ENCODE measurements at regions of chr12 and their contacts with region 1.

Region 1: DNA sequence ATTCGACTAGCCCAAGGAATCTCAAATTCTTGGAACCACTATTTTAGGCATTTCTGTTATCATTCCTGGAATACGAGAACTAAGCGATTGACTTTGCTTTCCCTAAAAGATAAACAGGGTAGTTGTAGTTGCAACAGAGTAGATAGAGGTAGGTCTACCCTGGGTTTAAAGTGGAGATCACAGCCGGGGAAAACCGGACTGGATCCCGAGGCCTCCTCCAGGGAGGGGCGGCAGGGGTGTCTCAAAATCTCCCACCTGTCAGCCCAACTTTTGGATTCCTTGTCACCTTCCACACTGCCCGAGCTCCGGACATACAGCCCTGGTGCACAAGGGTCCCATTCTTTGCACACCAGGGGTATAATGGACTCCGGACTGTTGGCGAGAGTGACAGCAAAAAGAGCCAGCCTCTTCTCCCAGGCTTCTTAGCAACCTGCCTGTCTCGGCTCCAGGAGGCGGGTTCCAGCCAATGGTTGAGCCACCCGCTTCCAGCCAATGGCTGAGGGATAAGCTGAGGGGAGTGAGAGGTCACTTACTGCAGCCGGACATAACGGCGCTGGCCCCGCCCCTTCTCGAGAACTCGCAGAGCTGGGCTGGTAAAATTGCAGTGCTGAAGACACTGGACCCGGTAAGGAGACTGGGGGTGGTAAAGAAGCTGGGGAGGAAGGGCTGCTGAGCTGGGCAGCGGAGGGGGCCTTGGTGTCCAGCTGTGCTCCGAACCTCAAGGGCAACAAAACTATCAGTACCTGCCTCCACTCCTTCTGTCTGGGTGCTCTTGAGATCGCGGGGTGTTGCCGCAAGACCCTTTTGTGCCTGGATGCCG is at the start of gene SUOX:
- DNase-seq: peak; percentile 98
- H3K4me3 Mint-ChIP-seq: peak within 1 kb of the TSS; percentile 92
- H3K27ac Mint-ChIP-seq: peak within 1 kb of the TSS; percentile 28
- H3K4me1 Mint-ChIP-seq: peaks cover 12% of the 10 kb centered on the region
- H3K27me3 Mint-ChIP-seq: no peaks in the 10 kb centered on the region
- CTCF ChIP-seq: no peak
- total RNA-seq, gene SUOX: 6.3 and 7.9 TPM in 2 replicates

Region 2: DNA sequence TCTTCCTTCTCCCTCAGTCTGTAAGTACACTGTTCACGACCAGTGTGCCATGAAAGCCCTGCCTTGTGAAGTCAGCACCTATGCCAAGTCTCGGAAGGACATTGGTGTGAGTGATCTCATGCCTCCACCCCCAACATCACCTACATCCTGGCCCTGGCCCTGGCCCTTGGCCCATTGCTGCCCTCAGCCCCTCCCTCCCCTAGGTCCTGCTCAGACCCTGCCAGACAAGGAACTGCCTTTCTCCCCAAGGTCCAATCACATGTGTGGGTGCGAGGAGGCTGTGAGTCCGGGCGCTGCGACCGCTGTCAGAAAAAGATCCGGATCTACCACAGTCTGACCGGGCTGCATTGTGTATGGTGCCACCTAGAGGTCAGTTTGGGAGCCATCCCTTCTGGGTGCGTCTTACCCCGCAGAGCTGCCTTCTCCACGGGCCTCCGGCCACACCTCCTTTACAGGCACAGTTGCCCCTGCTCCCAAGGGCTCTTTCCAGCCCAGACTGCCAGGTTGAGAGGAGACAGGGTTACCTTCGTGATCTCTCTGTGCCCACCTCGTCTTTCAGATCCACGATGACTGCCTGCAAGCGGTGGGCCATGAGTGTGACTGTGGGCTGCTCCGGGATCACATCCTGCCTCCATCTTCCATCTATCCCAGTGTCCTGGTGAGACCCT is 56.7 kb before region 1 on chr12:
- CTCF ChIA-PET with region 1: interaction called, 14 read pairs
- POLR2A ChIA-PET with region 1: no interaction called
- intact Hi-C with region 1: no loop called
- DNase-seq: peak; percentile 91
- H3K4me3 Mint-ChIP-seq: peak overlapping the region; percentile 48
- H3K27ac Mint-ChIP-seq: peak overlapping the region; percentile 52
- H3K4me1 Mint-ChIP-seq: peaks cover 49% of the 10 kb centered on the region
- H3K27me3 Mint-ChIP-seq: no peaks in the 10 kb centered on the region
- CTCF ChIP-seq: peak; percentile 85

Region 3: GRCh38 chr12:55973598-55974307 is 23.2 kb before region 1 on chr12 and contains the start of gene RAB5B:
- CTCF ChIA-PET with region 1: interaction called, 14 read pairs
- POLR2A ChIA-PET with region 1: interaction called, 71 read pairs
- intact Hi-C with region 1: no loop called
- DNase-seq: peak; percentile 100
- H3K4me3 Mint-ChIP-seq: no peak within 1 kb of the TSS
- H3K27ac Mint-ChIP-seq: no peak within 1 kb of the TSS
- H3K4me1 Mint-ChIP-seq: peaks cover 25% of the 10 kb centered on the region
- H3K27me3 Mint-ChIP-seq: no peaks in the 10 kb centered on the region
- CTCF ChIP-seq: no peak
- total RNA-seq, gene RAB5B: 67.4 and 96.1 TPM in 2 replicates

Region 4: GRCh38 chr12:56007564-56008559 is 10.9 kb after region 1 on chr12:
- CTCF ChIA-PET with region 1: interaction called, 19 read pairs
- POLR2A ChIA-PET with region 1: interaction called, 62 read pairs
- intact Hi-C with region 1: no loop called
- DNase-seq: peak; percentile 43
- H3K4me3 Mint-ChIP-seq: peak overlapping the region; percentile 69
- H3K27ac Mint-ChIP-seq: peak overlapping the region; percentile 60
- H3K4me1 Mint-ChIP-seq: no peaks in the 10 kb centered on the region
- H3K27me3 Mint-ChIP-seq: no peaks in the 10 kb centered on the region
- CTCF ChIP-seq: no peak

Region 5: GRCh38 chr12:56041552-56042429 is 44.9 kb after region 1 on chr12 and contains the start of gene RPS26:
- CTCF ChIA-PET with region 1: interaction called, 13 read pairs
- POLR2A ChIA-PET with region 1: interaction called, 25 read pairs
- intact Hi-C with region 1: loop called (anchors 1 kb)
- DNase-seq: peak; percentile 99
- H3K4me3 Mint-ChIP-seq: peak within 1 kb of the TSS; percentile 81
- H3K27ac Mint-ChIP-seq: peak within 1 kb of the TSS; percentile 91
- H3K4me1 Mint-ChIP-seq: peaks cover 7% of the 10 kb centered on the region
- H3K27me3 Mint-ChIP-seq: no peaks in the 10 kb centered on the region
- CTCF ChIP-seq: peak; percentile 33
- total RNA-seq, gene RPS26: 45.1 and 67.3 TPM in 2 replicates

Region 6: DNA sequence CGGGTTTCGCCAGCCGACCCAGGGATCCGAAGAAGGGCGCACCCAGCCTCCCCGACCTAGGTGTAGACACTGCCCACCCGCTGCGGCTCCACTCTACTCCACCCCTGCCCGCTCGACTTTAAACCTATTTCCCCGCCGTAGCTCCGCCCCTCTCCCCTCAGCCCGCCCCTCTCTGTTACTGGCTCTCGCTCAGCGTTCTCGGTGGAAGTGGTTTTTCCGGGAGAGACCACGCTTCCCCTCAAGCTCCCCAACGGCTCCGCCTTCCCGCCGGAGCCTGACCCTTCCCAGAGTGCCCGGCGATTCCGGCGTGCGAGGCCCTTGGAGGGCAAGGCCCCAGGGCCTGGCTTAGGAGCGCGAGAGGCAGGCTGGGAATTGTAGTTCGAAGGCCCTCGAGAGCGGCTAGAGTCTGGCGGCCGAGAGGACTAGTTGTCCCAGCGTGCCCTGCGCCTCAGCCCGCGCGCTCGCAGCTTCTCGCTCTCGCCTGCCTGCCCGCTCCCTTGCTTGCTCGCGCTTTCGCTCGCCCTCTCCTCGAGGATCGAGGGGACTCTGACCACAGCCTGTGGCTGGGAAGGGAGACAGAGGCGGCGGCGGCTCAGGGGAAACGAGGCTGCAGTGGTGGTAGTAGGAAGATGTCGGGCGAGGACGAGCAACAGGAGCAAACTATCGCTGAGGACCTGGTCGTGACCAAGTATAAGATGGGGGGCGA is 107.3 kb after region 1 on chr12 and contains the start of gene PA2G4:
- CTCF ChIA-PET with region 1: interaction called, 3 read pairs
- POLR2A ChIA-PET with region 1: interaction called, 33 read pairs
- intact Hi-C with region 1: no loop called
- DNase-seq: peak; percentile 99
- H3K4me3 Mint-ChIP-seq: peak within 1 kb of the TSS; percentile 97
- H3K27ac Mint-ChIP-seq: peak within 1 kb of the TSS; percentile 95
- H3K4me1 Mint-ChIP-seq: peaks cover 9% of the 10 kb centered on the region
- H3K27me3 Mint-ChIP-seq: no peaks in the 10 kb centered on the region
- CTCF ChIP-seq: no peak
- total RNA-seq, gene PA2G4: 158 and 205 TPM in 2 replicates

Measured in MCF 10A (cell line).